Ovary (tissue), 10 donors: ENCODE measurements at regions of chr2 and their contacts with region 1.

Region 1: GRCh38 chr2:156400706-156401678 is 35.2 kb upstream of the GPD2 start:
- DNase-seq: peak; percentile 70 to 85 (median 83)
- H3K4me3 ChIP-seq: peak overlapping the region; percentile 53
- H3K27ac ChIP-seq: peak overlapping the region; percentile 73 to 96
- H3K4me1 ChIP-seq: peaks cover 4% of the 10 kb centered on the region
- H3K27me3 ChIP-seq: no peaks in the 10 kb centered on the region
- CTCF ChIP-seq: peak in 1 of 3 donors; percentile 23
- EP300 ChIP-seq: no peak
- POLR2A ChIP-seq: no peak

Region 2: GRCh38 chr2:155281921-155282320 is 1119.1 kb before region 1 on chr2:
- intact Hi-C with region 1: no loop called
- DNase-seq: no peak
- H3K4me3 ChIP-seq: no peak overlapping the region
- H3K27ac ChIP-seq: no peak overlapping the region
- H3K4me1 ChIP-seq: no peaks in the 10 kb centered on the region
- H3K27me3 ChIP-seq: no peaks in the 10 kb centered on the region
- CTCF ChIP-seq: no peak
- EP300 ChIP-seq: no peak
- POLR2A ChIP-seq: no peak

Region 3: DNA sequence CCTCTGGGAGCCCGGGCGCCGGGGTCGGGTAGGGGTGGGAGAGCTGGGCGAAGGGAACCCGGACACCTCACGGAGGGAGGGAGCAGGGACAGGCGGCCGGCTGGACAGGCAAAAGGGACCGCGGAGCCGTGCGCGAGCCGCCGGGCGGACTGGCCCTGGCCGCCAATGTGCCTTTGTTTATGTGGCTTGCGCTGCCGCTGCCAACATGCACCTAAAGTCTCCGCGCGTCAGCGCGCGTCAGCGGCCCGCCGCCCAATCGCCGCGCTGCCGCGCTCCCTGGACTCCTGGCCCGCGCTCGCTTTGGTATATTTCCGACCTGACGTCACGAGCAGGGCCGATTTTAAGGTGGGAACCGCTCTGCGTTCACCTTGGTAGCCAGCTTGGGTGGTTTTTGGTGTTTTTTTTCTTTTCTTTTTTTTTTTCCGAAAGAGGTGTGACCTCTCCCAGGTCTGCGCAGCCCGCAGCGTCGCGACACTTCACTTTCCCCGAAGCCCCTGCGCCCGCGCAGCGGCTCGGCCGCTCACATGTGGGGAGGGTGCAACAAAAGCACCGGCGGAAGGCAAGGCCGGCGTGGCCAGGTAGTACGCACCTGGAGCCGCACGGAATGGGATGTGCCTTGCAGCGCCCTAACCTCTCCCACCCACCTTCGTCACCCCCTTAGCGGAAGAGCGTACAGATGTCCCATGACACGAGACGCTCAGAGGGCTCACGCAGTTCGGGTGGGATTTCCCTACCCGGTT is 68.3 kb before region 1 on chr2 and contains the start of gene NR4A2:
- intact Hi-C with region 1: loop called in 2 of 4 experiments (anchors 2 kb)
- DNase-seq: peak; percentile 87 to 95 (median 94)
- H3K4me3 ChIP-seq: peak within 1 kb of the TSS; percentile 76
- H3K27ac ChIP-seq: peak within 1 kb of the TSS; percentile 98 to 100
- H3K4me1 ChIP-seq: peaks cover 7% of the 10 kb centered on the region
- H3K27me3 ChIP-seq: no peaks in the 10 kb centered on the region
- CTCF ChIP-seq: no peak
- EP300 ChIP-seq: peak; percentile 14
- POLR2A ChIP-seq: peak; percentile 90
- total RNA-seq, gene NR4A2: 12.2 to 259 (median 45.9) TPM

Region 4: GRCh38 chr2:156341452-156342253 is 59.3 kb before region 1 on chr2:
- intact Hi-C with region 1: loop called in 2 of 4 experiments (anchors 2 to 5 kb)
- DNase-seq: peak; percentile 96 to 97 (median 97)
- H3K4me3 ChIP-seq: peak overlapping the region; percentile 79
- H3K27ac ChIP-seq: peak overlapping the region; percentile 99 to 100
- H3K4me1 ChIP-seq: no peaks in the 10 kb centered on the region
- H3K27me3 ChIP-seq: no peaks in the 10 kb centered on the region
- CTCF ChIP-seq: peak in 2 of 3 donors; percentile 5 to 14
- EP300 ChIP-seq: no peak
- POLR2A ChIP-seq: peak; percentile 79